ENCODE measurements at regions of chr7 and their contacts with region 1.

Region 1: GRCh38 chr7:25125137-25125946 is at the start of gene CYCS:
- DNase-seq: peak; percentile 99 to 100 (median 100)
- H3K4me3 ChIP-seq: peak within 1 kb of the TSS; percentile 93 to 98 (median 95)
- H3K4me3 Mint-ChIP-seq: peak within 1 kb of the TSS; percentile 99 to 100
- H3K27ac ChIP-seq: peak within 1 kb of the TSS; percentile 88 to 95
- H3K27ac Mint-ChIP-seq: peak within 1 kb of the TSS; percentile 95 to 99 (median 98)
- H3K4me1 ChIP-seq: peaks cover 10 to 12% of the 10 kb centered on the region in 2 donors
- H3K4me1 Mint-ChIP-seq: peaks cover 19% of the 10 kb centered on the region
- H3K27me3 ChIP-seq: no peaks in the 10 kb centered on the region
- H3K27me3 Mint-ChIP-seq: peaks cover 0 to 6% (median 1%) of the 10 kb centered on the region in 3 donors
- CTCF ChIP-seq: no peak
- polyA plus RNA-seq, gene CYCS: 35.8 to 99.3 (median 80.8) TPM

Region 2: GRCh38 chr7:24979863-24980533 is 145.3 kb before region 1 on chr7 and contains the start of gene OSBPL3:
- intact Hi-C with region 1: no loop called
- DNase-seq: peak; percentile 92 to 96 (median 93)
- H3K4me3 ChIP-seq: peak within 1 kb of the TSS; percentile 87 to 94 (median 93)
- H3K4me3 Mint-ChIP-seq: peak within 1 kb of the TSS; percentile 98 to 99
- H3K27ac ChIP-seq: peak within 1 kb of the TSS; percentile 69 to 93
- H3K27ac Mint-ChIP-seq: peak within 1 kb of the TSS; percentile 90 to 97 (median 95)
- H3K4me1 ChIP-seq: peaks cover 34 to 51% of the 10 kb centered on the region in 2 donors
- H3K4me1 Mint-ChIP-seq: peaks cover 46% of the 10 kb centered on the region
- H3K27me3 ChIP-seq: peaks cover 4 to 11% of the 10 kb centered on the region in 2 donors
- H3K27me3 Mint-ChIP-seq: peaks cover 14 to 25% (median 14%) of the 10 kb centered on the region in 3 donors
- CTCF ChIP-seq: peak; percentile 32
- polyA plus RNA-seq, gene OSBPL3: 2.6 to 9.2 (median 3.7) TPM

Region 3: GRCh38 chr7:25009257-25009656 is 116.1 kb before region 1 on chr7:
- intact Hi-C with region 1: no loop called
- DNase-seq: no peak
- H3K4me3 ChIP-seq: no peak overlapping the region
- H3K4me3 Mint-ChIP-seq: no peak overlapping the region
- H3K27ac ChIP-seq: no peak overlapping the region
- H3K27ac Mint-ChIP-seq: no peak overlapping the region
- H3K4me1 ChIP-seq: no peaks in the 10 kb centered on the region
- H3K4me1 Mint-ChIP-seq: no peaks in the 10 kb centered on the region
- H3K27me3 ChIP-seq: no peaks in the 10 kb centered on the region
- H3K27me3 Mint-ChIP-seq: peaks cover 0 to 2% (median 1%) of the 10 kb centered on the region in 3 donors
- CTCF ChIP-seq: no peak

Region 4: DNA sequence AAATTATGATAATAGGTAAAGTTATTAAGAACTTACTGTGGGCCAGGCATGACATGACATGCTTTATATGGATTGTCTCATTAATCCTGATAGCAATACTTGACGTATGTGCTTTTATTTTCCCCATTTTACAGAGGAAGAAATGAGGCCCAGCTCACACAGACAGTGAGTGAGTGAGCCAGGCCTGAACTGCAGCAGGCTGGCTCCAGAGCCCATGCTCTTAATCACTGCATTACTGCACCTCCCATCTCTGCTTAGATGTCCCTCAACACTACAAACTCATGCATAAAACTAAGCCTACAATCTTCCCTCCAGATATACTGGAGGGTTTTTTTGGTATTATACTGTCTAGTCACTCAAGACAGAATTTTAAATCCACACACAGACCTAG is 76.9 kb before region 1 on chr7:
- intact Hi-C with region 1: no loop called
- DNase-seq: no peak
- H3K4me3 ChIP-seq: no peak overlapping the region
- H3K4me3 Mint-ChIP-seq: no peak overlapping the region
- H3K27ac ChIP-seq: no peak overlapping the region
- H3K27ac Mint-ChIP-seq: no peak overlapping the region
- H3K4me1 ChIP-seq: no peaks in the 10 kb centered on the region
- H3K4me1 Mint-ChIP-seq: no peaks in the 10 kb centered on the region
- H3K27me3 ChIP-seq: no peaks in the 10 kb centered on the region
- H3K27me3 Mint-ChIP-seq: peaks cover 0 to 3% (median 1%) of the 10 kb centered on the region in 3 donors
- CTCF ChIP-seq: no peak

Region 5: DNA sequence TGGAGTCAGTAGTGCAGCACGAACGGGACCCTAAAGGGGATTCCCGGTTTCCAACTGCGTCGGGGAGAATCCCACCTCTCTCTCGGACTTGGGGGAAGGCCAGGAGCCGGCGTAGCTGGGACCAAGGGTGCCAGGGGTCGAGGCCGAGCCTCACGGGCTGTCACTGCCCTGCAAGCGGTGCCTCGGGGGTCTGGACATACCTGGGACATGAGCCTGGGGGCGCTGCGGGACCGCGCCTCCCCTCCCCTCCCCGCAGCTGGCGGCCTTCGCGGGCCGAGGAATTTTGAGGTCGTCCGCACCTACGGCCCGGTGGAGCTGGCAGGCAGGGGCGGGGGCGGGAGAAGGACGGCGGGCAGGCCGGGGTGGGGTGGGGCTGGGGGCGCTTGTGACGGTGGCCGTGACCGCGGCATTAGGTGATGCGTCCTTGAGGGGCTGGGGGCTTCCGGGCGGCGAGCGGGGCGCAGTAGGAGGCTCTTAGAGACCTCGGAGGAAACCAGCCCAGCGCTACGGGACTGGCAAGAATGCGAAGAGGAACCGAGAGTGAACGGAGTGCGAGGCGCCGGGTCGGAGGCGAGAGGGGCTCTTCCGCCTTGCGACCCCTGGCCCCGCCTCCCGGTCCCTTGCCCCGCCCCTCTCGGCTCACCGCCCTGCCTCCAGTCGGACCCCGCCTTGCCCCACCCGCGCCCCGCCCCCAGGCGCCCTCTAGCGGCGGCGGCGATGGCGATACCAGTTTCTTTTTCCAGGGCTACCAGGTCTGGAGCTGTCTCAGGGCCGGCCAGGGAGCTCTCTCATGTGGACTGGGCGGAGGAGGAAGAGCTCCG is 54.6 kb after region 1 on chr7:
- intact Hi-C with region 1: loop called in 1 of 2 experiments (anchors 2 kb)
- DNase-seq: peak; percentile 94 to 96 (median 95)
- H3K4me3 ChIP-seq: peak overlapping the region; percentile 66 to 83 (median 77)
- H3K4me3 Mint-ChIP-seq: peak overlapping the region; percentile 82 to 95
- H3K27ac ChIP-seq: peak overlapping the region; percentile 70 to 88
- H3K27ac Mint-ChIP-seq: peak overlapping the region; percentile 80 to 95 (median 89)
- H3K4me1 ChIP-seq: peaks cover 13 to 15% of the 10 kb centered on the region in 2 donors
- H3K4me1 Mint-ChIP-seq: peaks cover 20% of the 10 kb centered on the region
- H3K27me3 ChIP-seq: no peaks in the 10 kb centered on the region
- H3K27me3 Mint-ChIP-seq: peaks cover 6 to 12% (median 6%) of the 10 kb centered on the region in 3 donors
- CTCF ChIP-seq: peak; percentile 97